AG04450 (cell line): ENCODE measurements at regions of chr2 and their contacts with region 1.

Region 1: GRCh38 chr2:42964439-42965083 is 172.2 kb upstream of the HAAO start:
- DNase-seq: peak; percentile 90
- H3K4me3 ChIP-seq: no peak overlapping the region
- H3K27ac ChIP-seq: peak overlapping the region; percentile 90
- H3K27me3 ChIP-seq: no peaks in the 10 kb centered on the region
- CTCF ChIP-seq: no peak

Region 2: DNA sequence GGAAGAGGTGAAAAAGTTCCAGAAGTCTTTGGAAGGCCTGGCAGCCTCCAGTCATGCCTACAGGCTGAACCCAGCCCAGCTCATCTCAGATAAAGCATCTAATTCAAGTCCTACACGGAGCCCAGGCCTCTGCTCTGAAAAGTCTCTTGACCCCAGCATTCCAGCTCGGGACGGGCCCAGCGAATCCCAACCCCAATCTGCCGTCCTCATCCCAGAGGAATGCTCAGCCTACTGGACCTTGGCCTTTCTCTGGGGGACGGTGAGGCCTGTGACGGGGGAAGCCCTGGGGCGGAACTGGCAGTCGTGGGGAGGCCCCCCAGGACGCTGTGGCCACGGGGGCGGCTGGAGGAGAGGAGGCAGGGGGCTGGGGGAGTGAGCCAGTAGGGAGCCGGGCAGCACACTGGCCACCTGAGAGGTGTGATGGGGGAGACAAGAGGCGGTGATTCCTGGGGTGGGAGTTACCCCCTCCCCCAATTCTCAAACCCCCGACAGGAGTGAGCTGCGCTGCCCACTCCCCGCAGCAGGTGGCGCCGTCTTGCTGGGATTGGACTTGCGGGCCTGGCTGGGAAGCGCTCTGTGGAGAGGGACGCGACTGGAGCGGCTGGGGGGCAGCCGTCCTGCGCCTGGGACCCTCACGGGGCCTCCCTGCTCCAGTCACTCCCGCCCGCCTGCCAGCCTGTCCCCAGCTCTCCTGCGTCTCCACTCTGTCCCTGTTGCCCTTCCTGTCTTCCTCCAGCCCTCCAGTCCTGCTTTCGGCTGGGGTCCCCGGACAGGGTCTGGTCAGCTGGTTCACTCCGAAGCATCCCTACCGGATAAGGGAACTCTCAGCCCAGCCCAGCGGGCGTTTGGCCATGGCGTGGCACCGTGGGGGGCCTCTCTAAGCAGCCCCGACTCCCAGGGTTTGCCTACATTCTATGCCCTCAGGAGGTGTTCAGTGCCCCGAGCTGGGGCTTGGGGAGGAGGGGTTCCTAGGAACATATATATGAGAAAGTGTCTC is 10.5 kb after region 1 on chr2:
- CTCF ChIA-PET with region 1: interaction called, 16 read pairs
- POLR2A ChIA-PET with region 1: interaction called, 6 read pairs
- DNase-seq: no peak
- H3K4me3 ChIP-seq: peak overlapping the region; percentile 47
- H3K27ac ChIP-seq: peak overlapping the region; percentile 47
- H3K27me3 ChIP-seq: no peaks in the 10 kb centered on the region
- CTCF ChIP-seq: peak; percentile 95

Region 3: DNA sequence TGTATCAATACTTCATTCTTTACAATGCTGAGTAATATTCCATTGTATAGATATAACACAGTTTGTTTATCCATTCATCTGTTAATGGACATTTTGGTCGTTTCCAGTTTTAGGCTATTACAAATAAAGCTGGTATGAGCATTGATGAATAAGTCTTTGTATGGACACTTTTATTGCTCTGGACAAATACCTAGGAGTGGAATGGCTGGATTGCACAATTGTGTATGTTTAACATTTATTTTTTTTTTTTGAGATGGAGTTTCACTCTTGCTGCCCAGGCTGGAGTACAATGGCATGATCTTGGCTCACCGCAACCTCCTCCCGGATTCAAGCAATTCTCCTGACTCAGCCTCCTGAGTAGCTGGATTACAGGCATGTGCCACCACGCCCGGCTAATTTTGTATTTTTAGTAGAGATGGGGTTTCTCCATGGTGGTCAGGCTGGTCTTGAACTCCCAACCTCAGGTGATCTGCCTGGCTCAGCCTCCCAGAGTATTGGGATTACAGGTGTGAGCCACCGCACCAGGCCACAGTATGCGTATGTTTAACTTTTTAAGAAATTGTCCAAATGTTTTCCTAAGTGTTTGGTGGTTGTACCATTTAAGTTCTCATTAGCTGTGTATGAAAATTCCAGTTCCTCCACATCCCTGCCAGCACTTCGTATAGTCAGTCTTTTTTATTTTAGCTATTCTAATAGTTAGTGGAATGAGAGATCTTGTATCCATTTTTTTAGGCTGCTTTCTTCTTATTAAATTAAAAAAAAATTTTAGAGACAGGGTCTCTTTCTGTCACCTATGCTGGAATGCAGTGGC is 22.8 kb after region 1 on chr2:
- CTCF ChIA-PET with region 1: no interaction called
- POLR2A ChIA-PET with region 1: no interaction called
- DNase-seq: no peak
- H3K4me3 ChIP-seq: no peak overlapping the region
- H3K27ac ChIP-seq: no peak overlapping the region
- H3K27me3 ChIP-seq: no peaks in the 10 kb centered on the region
- CTCF ChIP-seq: no peak

Region 4: DNA sequence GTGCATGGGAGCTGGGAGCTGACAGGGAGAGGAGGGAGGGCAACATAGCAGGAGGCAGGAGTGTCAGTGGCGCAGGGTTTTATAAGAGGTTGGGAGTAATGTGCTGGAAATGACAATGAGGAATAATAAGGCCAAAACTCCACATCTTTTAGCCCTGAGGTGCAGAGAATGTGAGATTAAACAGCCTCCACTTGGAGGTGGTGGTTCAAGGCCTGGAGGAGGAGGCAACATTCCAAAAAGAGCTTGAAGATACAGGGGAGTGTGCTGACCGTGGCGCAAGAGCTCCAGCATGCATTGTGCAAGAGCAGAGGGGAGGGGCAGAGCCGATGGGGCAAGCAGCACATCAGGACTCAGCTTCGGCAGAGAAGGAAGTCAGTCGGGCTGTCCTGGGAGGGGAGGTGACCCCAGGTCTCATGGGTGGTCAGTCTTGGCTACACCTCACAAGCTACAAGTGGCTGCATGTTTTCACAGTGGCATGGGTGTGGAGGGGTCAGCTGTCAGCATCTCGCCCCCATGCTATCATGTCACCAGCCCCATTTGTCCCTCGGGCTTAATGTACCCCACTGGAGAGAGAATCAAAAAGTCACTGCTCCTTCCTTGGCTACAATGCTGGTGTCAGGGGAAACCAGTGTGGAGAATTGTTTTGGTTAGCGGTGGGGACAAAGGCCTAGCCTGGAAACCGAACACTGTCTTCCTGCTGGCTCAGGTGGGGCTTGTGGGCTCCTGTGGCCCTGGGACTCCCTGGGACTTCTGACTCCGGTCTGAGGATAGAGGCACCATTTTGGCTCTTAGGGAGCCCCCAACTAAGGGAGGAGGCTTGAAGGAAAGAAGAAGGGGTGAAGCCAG is 53.8 kb after region 1 on chr2:
- CTCF ChIA-PET with region 1: no interaction called
- POLR2A ChIA-PET with region 1: no interaction called
- DNase-seq: peak; percentile 60
- H3K4me3 ChIP-seq: no peak overlapping the region
- H3K27ac ChIP-seq: peak overlapping the region; percentile 21
- H3K27me3 ChIP-seq: no peaks in the 10 kb centered on the region
- CTCF ChIP-seq: no peak